AG04450 (cell line): ENCODE measurements at regions of chr2 and their contacts with region 1.

Region 1: DNA sequence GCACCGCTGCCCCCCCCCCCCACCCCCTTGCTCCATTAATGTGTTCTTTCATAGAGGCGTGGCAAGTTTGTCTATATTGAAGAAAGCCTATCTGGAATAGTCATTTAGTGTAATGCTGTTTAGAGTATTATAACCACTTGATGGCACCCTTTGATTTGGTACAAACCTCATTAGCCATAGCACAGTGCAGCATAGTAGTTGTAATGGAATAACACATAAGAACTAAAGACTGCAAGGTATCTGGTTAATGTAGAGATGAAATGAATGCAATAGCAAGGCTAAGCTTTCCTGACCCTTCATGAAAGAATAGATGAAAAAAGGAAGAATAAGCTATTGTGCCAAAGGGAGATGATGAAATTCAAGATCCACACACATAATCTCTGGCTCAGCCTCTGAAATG is 81.9 kb downstream of the EHBP1 start:
- DNase-seq: no peak
- H3K4me3 ChIP-seq: no peak overlapping the region
- H3K27ac ChIP-seq: no peak overlapping the region
- H3K27me3 ChIP-seq: no peaks in the 10 kb centered on the region
- CTCF ChIP-seq: peak; percentile 38

Region 2: GRCh38 chr2:62774555-62775366 is 12.6 kb before region 1 on chr2:
- CTCF ChIA-PET with region 1: interaction called, 10 read pairs
- POLR2A ChIA-PET with region 1: no interaction called
- DNase-seq: no peak
- H3K4me3 ChIP-seq: no peak overlapping the region
- H3K27ac ChIP-seq: no peak overlapping the region
- H3K27me3 ChIP-seq: no peaks in the 10 kb centered on the region
- CTCF ChIP-seq: peak; percentile 73

Region 3: GRCh38 chr2:62808554-62808953 is 21.2 kb after region 1 on chr2:
- CTCF ChIA-PET with region 1: no interaction called
- POLR2A ChIA-PET with region 1: no interaction called
- DNase-seq: no peak
- H3K4me3 ChIP-seq: no peak overlapping the region
- H3K27ac ChIP-seq: no peak overlapping the region
- H3K27me3 ChIP-seq: no peaks in the 10 kb centered on the region
- CTCF ChIP-seq: no peak

Region 4: DNA sequence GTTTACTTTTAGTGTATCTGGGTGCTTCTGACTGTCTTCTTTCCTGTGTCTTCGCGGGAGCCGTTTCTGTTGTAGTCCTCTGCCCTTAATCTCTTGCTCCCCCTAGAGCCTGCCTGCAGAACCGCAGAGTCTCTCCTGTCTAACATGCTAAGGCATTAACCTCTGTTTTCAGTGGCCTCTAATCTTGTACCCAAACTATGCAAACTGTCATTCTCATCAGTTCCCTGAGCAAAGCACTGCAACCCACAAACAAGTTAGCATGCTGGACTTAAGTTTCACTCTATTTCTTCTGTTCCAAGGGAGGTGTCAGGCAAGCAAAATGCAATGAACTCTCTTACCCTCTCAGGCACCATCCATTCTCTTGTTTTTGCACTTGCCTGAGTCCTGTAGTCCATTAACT is 401.6 kb after region 1 on chr2:
- CTCF ChIA-PET with region 1: interaction called, 10 read pairs
- POLR2A ChIA-PET with region 1: no interaction called
- DNase-seq: peak; percentile 16
- H3K4me3 ChIP-seq: no peak overlapping the region
- H3K27ac ChIP-seq: no peak overlapping the region
- H3K27me3 ChIP-seq: no peaks in the 10 kb centered on the region
- CTCF ChIP-seq: peak; percentile 93

Region 5: DNA sequence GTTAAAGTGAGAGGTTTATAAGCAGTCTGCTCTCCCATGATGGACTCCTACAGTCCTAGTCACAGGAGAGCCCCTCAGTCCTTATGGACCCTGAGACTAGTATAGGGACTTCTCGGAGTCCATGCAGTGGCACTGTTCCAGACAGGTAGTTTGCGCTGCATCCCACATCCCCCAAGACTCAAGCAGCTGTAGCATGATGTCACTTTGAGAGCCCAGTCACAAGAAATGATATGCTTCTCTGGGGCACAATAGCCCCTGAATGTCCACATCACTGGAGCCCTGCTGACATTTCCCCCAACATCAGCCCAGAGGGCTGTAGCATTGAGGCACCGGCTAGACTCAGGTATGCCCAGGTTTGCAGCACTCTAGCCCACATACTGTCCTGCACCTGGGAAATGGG is 483.3 kb after region 1 on chr2:
- CTCF ChIA-PET with region 1: no interaction called
- POLR2A ChIA-PET with region 1: no interaction called
- DNase-seq: no peak
- H3K4me3 ChIP-seq: no peak overlapping the region
- H3K27ac ChIP-seq: no peak overlapping the region
- H3K27me3 ChIP-seq: no peaks in the 10 kb centered on the region
- CTCF ChIP-seq: no peak

Region 6: DNA sequence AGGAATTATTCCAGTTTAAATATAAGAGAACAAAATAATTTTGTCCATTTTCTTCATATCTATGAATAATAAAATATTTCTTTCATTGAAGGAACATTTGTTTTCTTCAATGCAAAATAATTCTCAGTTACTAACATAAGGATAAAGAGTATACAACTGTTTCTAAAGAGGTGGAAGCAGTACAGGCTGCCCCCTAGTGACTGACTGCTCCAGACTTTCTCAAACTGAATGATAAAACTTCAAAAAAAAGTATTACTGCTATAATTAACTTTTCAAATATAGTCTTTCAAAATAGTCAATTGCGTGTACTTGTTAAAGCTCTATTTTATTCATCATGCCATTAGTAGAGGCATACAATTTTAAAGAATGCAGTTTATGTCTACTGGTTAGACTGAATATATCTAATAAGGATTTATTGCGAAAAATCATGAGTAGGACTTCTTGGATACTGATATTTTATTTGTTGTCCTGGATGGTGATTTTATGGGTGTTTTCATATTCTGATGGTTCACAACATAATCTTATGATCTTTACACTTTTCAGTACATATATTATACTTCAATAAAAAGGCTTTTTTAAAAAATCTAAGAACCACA is 700.8 kb after region 1 on chr2:
- CTCF ChIA-PET with region 1: interaction called, 13 read pairs
- POLR2A ChIA-PET with region 1: no interaction called
- DNase-seq: no peak
- H3K4me3 ChIP-seq: no peak overlapping the region
- H3K27ac ChIP-seq: no peak overlapping the region
- H3K27me3 ChIP-seq: no peaks in the 10 kb centered on the region
- CTCF ChIP-seq: peak; percentile 86